CD8-positive, alpha-beta T cell (primary cell): ENCODE measurements at regions of chr19 and their contacts with region 1.

Region 1: GRCh38 chr19:44093931-44094765 is at the start of gene ZNF224:
- DNase-seq: peak; percentile 55 to 91 (median 83)
- ATAC-seq: peak; percentile 78
- H3K4me3 ChIP-seq: peak within 1 kb of the TSS; percentile 76 to 89
- H3K4me3 Mint-ChIP-seq: peak within 1 kb of the TSS; percentile 96
- H3K27ac ChIP-seq: peak within 1 kb of the TSS; percentile 63 to 74
- H3K27ac Mint-ChIP-seq: peak within 1 kb of the TSS; percentile 91
- H3K4me1 ChIP-seq: no peaks in the 10 kb centered on the region
- H3K4me1 Mint-ChIP-seq: peaks cover 28% of the 10 kb centered on the region
- H3K27me3 ChIP-seq: no peaks in the 10 kb centered on the region
- H3K27me3 Mint-ChIP-seq: no peaks in the 10 kb centered on the region
- CTCF ChIP-seq: no peak
- total RNA-seq, gene ZNF224: 18.2 to 22.5 TPM

Region 2: GRCh38 chr19:43820098-43820883 is 273.9 kb before region 1 on chr19:
- CTCF ChIA-PET with region 1: no interaction called
- POLR2A ChIA-PET with region 1: no interaction called
- intact Hi-C with region 1: loop called in 1 of 2 experiments (anchors 5 kb)
- DNase-seq: peak in 3 of 9 experiments; percentile 22 to 51 (median 34)
- ATAC-seq: peak; percentile 48
- H3K4me3 ChIP-seq: peak overlapping the region; percentile 42 to 43
- H3K4me3 Mint-ChIP-seq: peak overlapping the region; percentile 83
- H3K27ac ChIP-seq: no peak overlapping the region
- H3K27ac Mint-ChIP-seq: no peak overlapping the region
- H3K4me1 ChIP-seq: no peaks in the 10 kb centered on the region
- H3K4me1 Mint-ChIP-seq: peaks cover 9% of the 10 kb centered on the region
- H3K27me3 ChIP-seq: peaks cover 0 to 4% of the 10 kb centered on the region in 2 experiments
- H3K27me3 Mint-ChIP-seq: peaks cover 44% of the 10 kb centered on the region
- CTCF ChIP-seq: no peak

Region 3: GRCh38 chr19:43983912-43984686 is 110.0 kb before region 1 on chr19 and contains the start of gene ZNF155:
- CTCF ChIA-PET with region 1: no interaction called
- POLR2A ChIA-PET with region 1: no interaction called
- intact Hi-C with region 1: loop called in 1 of 2 experiments (anchors 1 kb)
- DNase-seq: peak; percentile 28 to 89 (median 64)
- ATAC-seq: peak; percentile 86
- H3K4me3 ChIP-seq: peak within 1 kb of the TSS; percentile 76 to 92
- H3K4me3 Mint-ChIP-seq: peak within 1 kb of the TSS; percentile 96
- H3K27ac ChIP-seq: peak within 1 kb of the TSS; percentile 61 to 65
- H3K27ac Mint-ChIP-seq: peak within 1 kb of the TSS; percentile 92
- H3K4me1 ChIP-seq: no peaks in the 10 kb centered on the region
- H3K4me1 Mint-ChIP-seq: peaks cover 15% of the 10 kb centered on the region
- H3K27me3 ChIP-seq: no peaks in the 10 kb centered on the region
- H3K27me3 Mint-ChIP-seq: no peaks in the 10 kb centered on the region
- CTCF ChIP-seq: no peak
- total RNA-seq, gene ZNF155: 3.4 to 3.5 TPM

Region 4: DNA sequence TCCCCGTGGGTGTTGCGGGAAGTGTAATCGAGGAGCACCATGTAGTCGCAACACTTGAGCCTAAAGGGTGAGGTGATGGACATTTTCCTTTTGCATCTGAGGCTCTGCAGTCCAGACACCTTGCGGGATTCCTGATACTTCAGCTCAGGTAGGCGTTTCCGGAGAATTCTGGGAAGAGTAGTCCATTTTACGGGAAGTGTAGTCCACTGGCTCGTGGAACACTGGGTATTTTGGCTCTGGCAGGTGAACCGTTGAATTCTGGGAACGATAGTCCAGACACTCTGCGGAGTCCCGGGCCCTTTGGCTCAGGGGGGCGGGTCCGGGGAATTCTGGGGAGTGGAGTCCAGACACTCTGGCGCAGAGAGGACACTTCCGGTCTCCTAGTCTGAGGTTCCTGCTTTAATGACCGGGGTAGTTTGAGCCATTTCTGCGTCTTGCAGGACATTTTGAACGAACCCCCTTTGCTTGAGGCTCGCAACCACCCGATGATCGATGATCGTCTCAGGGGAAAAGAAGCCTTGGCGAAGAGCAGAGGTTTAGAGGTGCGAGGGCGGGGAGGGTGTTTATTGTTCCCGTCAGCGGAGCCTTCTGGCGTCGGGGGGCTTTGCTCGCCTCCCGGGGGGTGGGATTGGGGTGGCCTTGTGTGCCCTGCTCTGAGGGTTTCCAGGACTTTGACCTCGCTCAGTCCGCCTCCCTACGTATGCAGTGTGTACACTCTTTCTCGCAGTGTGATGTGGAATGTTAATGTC is 42.3 kb before region 1 on chr19 and contains the start of gene ZNF223:
- CTCF ChIA-PET with region 1: interaction called, 3 read pairs
- POLR2A ChIA-PET with region 1: no interaction called
- intact Hi-C with region 1: loop called in 1 of 2 experiments (anchors 1 kb)
- DNase-seq: peak; percentile 9 to 85 (median 68)
- ATAC-seq: peak; percentile 84
- H3K4me3 ChIP-seq: peak within 1 kb of the TSS; percentile 71 to 77
- H3K4me3 Mint-ChIP-seq: peak within 1 kb of the TSS; percentile 93
- H3K27ac ChIP-seq: peak within 1 kb of the TSS in 1 of 2 experiments; percentile 40
- H3K27ac Mint-ChIP-seq: peak within 1 kb of the TSS; percentile 85
- H3K4me1 ChIP-seq: peaks cover 11% of the 10 kb centered on the region
- H3K4me1 Mint-ChIP-seq: peaks cover 38% of the 10 kb centered on the region
- H3K27me3 ChIP-seq: no peaks in the 10 kb centered on the region
- H3K27me3 Mint-ChIP-seq: no peaks in the 10 kb centered on the region
- CTCF ChIP-seq: no peak
- total RNA-seq, gene ZNF223: 0.72 to 1.3 TPM

Region 5: DNA sequence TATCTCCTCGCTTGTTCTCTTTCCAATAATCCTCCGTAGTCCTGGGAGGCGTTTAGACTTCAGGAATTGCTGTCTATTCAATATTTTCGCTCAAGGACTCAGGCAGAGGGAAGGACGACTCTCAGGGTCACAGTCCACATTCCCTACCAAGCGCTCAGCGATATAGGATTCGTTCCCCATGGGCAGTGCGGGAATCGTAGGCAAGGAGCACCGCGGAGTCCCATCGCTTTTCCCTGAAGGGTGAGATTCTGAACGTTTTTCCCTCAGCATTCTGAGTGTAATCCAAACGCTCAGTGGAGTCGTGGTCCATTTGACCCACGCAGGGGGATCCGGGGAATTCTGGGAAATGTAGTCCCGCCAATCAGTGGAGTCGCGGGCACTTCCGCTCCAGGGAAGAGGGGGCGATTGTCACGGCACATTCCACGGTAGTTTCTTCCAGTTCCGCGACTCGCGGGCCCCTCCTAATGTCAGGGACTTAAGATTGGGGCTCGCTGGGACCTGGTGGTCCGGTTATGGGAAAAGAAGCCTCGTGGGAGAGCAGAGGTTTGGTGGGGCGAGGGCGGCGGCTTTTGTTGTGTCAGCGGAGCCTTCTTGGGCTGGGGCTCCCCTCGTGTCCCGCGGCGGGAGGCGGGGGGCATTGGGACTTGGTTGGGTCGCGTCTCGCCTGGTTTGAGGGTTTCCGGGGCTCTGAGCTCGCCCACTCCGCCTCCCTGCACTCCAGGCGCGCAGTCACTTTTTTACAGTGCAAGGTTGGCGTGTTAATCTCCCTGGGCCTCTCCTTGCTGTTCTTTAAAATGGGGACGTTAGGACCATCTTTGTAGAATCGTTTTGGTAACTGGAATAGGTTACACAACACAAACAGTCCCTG is 47.3 kb after region 1 on chr19 and contains the start of gene ZNF234:
- CTCF ChIA-PET with region 1: interaction called, 3 read pairs
- POLR2A ChIA-PET with region 1: no interaction called
- intact Hi-C with region 1: loop called in 1 of 2 experiments (anchors 2 kb)
- DNase-seq: peak; percentile 22 to 86 (median 68)
- ATAC-seq: peak; percentile 93
- H3K4me3 ChIP-seq: peak within 1 kb of the TSS; percentile 77 to 82
- H3K4me3 Mint-ChIP-seq: peak within 1 kb of the TSS; percentile 96
- H3K27ac ChIP-seq: peak within 1 kb of the TSS; percentile 34 to 76
- H3K27ac Mint-ChIP-seq: peak within 1 kb of the TSS; percentile 85
- H3K4me1 ChIP-seq: peaks cover 17% of the 10 kb centered on the region
- H3K4me1 Mint-ChIP-seq: peaks cover 25% of the 10 kb centered on the region
- H3K27me3 ChIP-seq: no peaks in the 10 kb centered on the region
- H3K27me3 Mint-ChIP-seq: no peaks in the 10 kb centered on the region
- CTCF ChIP-seq: no peak
- total RNA-seq, gene ZNF234: 2.2 to 2.4 TPM

Region 6: DNA sequence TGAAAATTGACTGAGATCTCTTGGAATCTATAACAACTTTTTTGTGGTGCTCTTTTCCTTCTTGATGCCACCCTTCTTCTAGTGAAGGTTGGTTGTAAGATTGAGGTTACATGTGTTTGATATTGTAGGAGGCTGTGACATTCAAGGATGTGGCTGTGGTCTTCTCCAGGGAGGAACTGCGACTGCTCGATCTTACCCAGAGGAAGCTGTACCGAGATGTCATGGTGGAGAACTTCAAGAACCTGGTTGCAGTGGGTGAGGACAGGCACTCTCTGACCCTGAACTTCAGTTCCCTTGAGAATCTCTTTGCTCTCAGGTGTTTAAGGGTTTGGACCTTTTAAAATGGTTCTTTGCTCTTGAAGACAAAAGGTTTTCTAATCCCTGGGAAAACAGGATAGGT is 134.2 kb after region 1 on chr19:
- CTCF ChIA-PET with region 1: no interaction called
- POLR2A ChIA-PET with region 1: no interaction called
- intact Hi-C with region 1: no loop called
- DNase-seq: no peak
- ATAC-seq: no peak
- H3K4me3 ChIP-seq: no peak overlapping the region
- H3K4me3 Mint-ChIP-seq: no peak overlapping the region
- H3K27ac ChIP-seq: no peak overlapping the region
- H3K27ac Mint-ChIP-seq: no peak overlapping the region
- H3K4me1 ChIP-seq: no peaks in the 10 kb centered on the region
- H3K4me1 Mint-ChIP-seq: peaks cover 4% of the 10 kb centered on the region
- H3K27me3 ChIP-seq: no peaks in the 10 kb centered on the region
- H3K27me3 Mint-ChIP-seq: no peaks in the 10 kb centered on the region
- CTCF ChIP-seq: no peak

Region 7: DNA sequence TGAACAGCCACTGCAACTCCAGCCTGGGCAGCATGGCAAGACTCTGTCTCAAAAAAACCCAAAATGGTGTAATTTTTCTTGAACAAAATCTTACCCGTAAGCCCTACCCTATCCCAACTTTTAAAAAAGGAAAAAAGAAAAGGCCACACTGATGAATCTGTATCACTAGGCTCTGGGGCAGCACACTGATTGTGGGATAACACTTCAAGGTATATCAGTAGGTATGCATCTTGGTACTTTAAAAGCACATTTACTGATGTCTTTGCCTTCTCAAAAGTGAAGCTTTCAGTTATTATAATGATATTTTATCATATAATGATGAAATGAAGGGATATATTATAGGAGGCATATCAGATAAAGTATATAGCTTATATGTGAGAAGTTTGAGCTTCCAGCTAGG is 238.0 kb after region 1 on chr19:
- CTCF ChIA-PET with region 1: no interaction called
- POLR2A ChIA-PET with region 1: no interaction called
- intact Hi-C with region 1: no loop called
- DNase-seq: no peak
- ATAC-seq: no peak
- H3K4me3 ChIP-seq: no peak overlapping the region
- H3K4me3 Mint-ChIP-seq: no peak overlapping the region
- H3K27ac ChIP-seq: no peak overlapping the region
- H3K27ac Mint-ChIP-seq: no peak overlapping the region
- H3K4me1 ChIP-seq: no peaks in the 10 kb centered on the region
- H3K4me1 Mint-ChIP-seq: no peaks in the 10 kb centered on the region
- H3K27me3 ChIP-seq: no peaks in the 10 kb centered on the region
- H3K27me3 Mint-ChIP-seq: peaks cover 2% of the 10 kb centered on the region
- CTCF ChIP-seq: no peak

Region 8: GRCh38 chr19:44500148-44500956 is 406.2 kb after region 1 on chr19 and contains the start of gene ZNF180:
- CTCF ChIA-PET with region 1: no interaction called
- POLR2A ChIA-PET with region 1: interaction called, 4 read pairs
- intact Hi-C with region 1: loop called in 1 of 2 experiments (anchors 1 kb)
- DNase-seq: peak; percentile 89 to 98 (median 96)
- ATAC-seq: peak; percentile 96
- H3K4me3 ChIP-seq: peak within 1 kb of the TSS; percentile 86 to 90
- H3K4me3 Mint-ChIP-seq: peak within 1 kb of the TSS; percentile 92
- H3K27ac ChIP-seq: peak within 1 kb of the TSS; percentile 60 to 77
- H3K27ac Mint-ChIP-seq: peak within 1 kb of the TSS; percentile 92
- H3K4me1 ChIP-seq: peaks cover 21% of the 10 kb centered on the region
- H3K4me1 Mint-ChIP-seq: peaks cover 34% of the 10 kb centered on the region
- H3K27me3 ChIP-seq: no peaks in the 10 kb centered on the region
- H3K27me3 Mint-ChIP-seq: peaks cover 10% of the 10 kb centered on the region
- CTCF ChIP-seq: peak; percentile 35
- total RNA-seq, gene ZNF180: 8.5 to 8.8 TPM